ENCODE measurements at regions of chr3 and their contacts with region 1.

Region 1: DNA sequence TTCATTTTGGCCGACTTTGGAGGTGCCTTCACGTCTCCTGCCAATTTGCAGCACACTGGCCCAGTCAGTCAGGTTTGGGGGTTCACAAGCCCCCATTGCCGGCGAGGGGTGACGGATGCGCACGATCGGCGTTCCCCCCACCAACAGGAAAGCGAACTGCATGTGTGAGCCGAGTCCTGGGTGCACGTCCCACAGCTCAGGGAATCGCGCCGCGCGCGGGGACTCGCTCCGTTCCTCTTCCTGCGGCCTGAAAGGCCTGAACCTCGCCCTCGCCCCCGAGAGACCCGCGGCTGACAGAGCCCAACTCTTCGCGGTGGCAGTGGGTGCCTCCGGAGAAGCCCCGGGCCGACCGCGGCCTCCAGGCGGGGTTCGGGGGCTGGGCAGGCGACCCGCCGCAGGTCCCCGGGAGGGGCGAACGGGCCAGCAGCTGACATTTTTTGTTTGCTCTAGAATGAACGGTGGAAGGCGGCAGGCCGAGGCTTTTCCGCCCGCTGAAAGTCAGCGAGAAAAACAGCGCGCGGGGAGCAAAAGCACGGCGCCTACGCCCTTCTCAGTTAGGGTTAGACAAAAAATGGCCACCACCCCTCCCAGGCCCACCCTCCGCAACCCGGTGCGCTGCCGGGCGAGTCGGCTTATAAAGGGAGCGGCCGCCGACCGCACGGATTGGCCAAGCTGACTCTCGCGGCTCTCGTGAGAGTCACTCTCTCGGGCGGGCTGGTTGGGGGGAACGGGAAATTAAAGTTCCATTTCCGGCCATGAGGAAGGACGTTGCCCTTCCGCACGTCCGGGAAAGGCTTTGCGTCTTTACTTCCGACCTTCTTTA is at the start of gene TERC:
- DNase-seq: peak; percentile 72 to 97
- ATAC-seq: peak; percentile 77 to 89 (median 84)
- H3K4me3 ChIP-seq: peak within 1 kb of the TSS; percentile 95
- H3K4me3 Mint-ChIP-seq: peak within 1 kb of the TSS; percentile 99
- H3K27ac ChIP-seq: peak within 1 kb of the TSS; percentile 95
- H3K27ac Mint-ChIP-seq: peak within 1 kb of the TSS; percentile 90 to 92
- H3K4me1 ChIP-seq: peaks cover 15% of the 10 kb centered on the region
- H3K4me1 Mint-ChIP-seq: peaks cover 28 to 36% of the 10 kb centered on the region in 2 donors
- H3K27me3 ChIP-seq: no peaks in the 10 kb centered on the region
- H3K27me3 Mint-ChIP-seq: no peaks in the 10 kb centered on the region
- CTCF ChIP-seq: no peak
- total RNA-seq, gene TERC: 0.92 to 2.7 (median 1.3) TPM

Region 2: GRCh38 chr3:169863458-169863899 is 98.8 kb after region 1 on chr3:
- intact Hi-C with region 1: loop called (anchors 2 kb)
- DNase-seq: peak; percentile 24 to 86
- ATAC-seq: peak; percentile 63 to 74 (median 70)
- H3K4me3 ChIP-seq: no peak overlapping the region
- H3K4me3 Mint-ChIP-seq: no peak overlapping the region
- H3K27ac ChIP-seq: no peak overlapping the region
- H3K27ac Mint-ChIP-seq: no peak overlapping the region
- H3K4me1 ChIP-seq: peaks cover 5% of the 10 kb centered on the region
- H3K4me1 Mint-ChIP-seq: peaks cover 0 to 5% of the 10 kb centered on the region in 2 donors
- H3K27me3 ChIP-seq: no peaks in the 10 kb centered on the region
- H3K27me3 Mint-ChIP-seq: peaks cover 9 to 10% of the 10 kb centered on the region in 2 donors
- CTCF ChIP-seq: peak; percentile 91

Region 3: DNA sequence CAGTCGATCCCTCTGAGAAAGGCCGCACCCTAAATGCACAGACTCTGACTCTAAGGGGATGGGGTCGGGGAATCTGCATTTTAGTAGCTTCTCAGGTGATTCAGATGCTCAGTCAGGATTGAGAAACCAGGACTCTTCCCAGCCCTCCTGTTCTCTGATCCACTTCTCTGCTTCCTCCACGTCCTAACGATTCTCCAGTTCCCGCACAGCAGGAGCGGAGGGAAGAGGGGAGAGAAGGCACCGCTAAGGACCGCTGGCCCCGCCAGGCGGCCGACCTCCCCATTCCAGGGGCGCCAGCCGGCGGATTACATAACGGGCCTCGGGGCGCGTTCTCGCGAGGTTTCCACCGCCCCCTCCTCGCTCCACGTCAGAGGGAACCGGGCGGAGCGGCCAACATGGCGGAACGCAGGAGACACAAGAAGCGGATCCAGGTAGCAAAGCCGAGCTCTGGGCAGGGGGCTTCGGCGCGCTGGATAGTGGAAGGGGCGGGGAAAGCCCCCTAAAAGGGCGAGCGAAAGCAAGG is 201.8 kb after region 1 on chr3 and contains the start of gene SEC62:
- intact Hi-C with region 1: loop called (anchors 1 kb)
- DNase-seq: peak; percentile 93 to 97
- ATAC-seq: peak; percentile 90 to 94 (median 93)
- H3K4me3 ChIP-seq: peak within 1 kb of the TSS; percentile 71
- H3K4me3 Mint-ChIP-seq: peak within 1 kb of the TSS; percentile 98
- H3K27ac ChIP-seq: peak within 1 kb of the TSS; percentile 92
- H3K27ac Mint-ChIP-seq: peak within 1 kb of the TSS; percentile 95 to 98
- H3K4me1 ChIP-seq: peaks cover 14% of the 10 kb centered on the region
- H3K4me1 Mint-ChIP-seq: peaks cover 30 to 40% of the 10 kb centered on the region in 2 donors
- H3K27me3 ChIP-seq: no peaks in the 10 kb centered on the region
- H3K27me3 Mint-ChIP-seq: peaks cover 13 to 17% of the 10 kb centered on the region in 2 donors
- CTCF ChIP-seq: no peak
- total RNA-seq, gene SEC62: 83.3 to 88.5 (median 86.6) TPM

Region 4: GRCh38 chr3:170037463-170038433 is 273.1 kb after region 1 on chr3 and contains the start of gene GPR160:
- intact Hi-C with region 1: loop called (anchors 5 kb)
- DNase-seq: peak; percentile 78 to 87
- ATAC-seq: peak; percentile 86 to 89 (median 88)
- H3K4me3 ChIP-seq: peak within 1 kb of the TSS; percentile 56
- H3K4me3 Mint-ChIP-seq: peak within 1 kb of the TSS; percentile 83
- H3K27ac ChIP-seq: no peak within 1 kb of the TSS
- H3K27ac Mint-ChIP-seq: peak within 1 kb of the TSS in 1 of 2 donors; percentile 58
- H3K4me1 ChIP-seq: peaks cover 24% of the 10 kb centered on the region
- H3K4me1 Mint-ChIP-seq: peaks cover 21 to 22% of the 10 kb centered on the region in 2 donors
- H3K27me3 ChIP-seq: no peaks in the 10 kb centered on the region
- H3K27me3 Mint-ChIP-seq: no peaks in the 10 kb centered on the region
- CTCF ChIP-seq: peak; percentile 87
- total RNA-seq, gene GPR160: 1.8 to 5.5 (median 3.8) TPM

Region 5: GRCh38 chr3:170180908-170181879 is 416.5 kb after region 1 on chr3 and contains the start of gene PHC3:
- intact Hi-C with region 1: loop called (anchors 5 kb)
- DNase-seq: peak; percentile 87 to 96
- ATAC-seq: peak; percentile 79 to 88 (median 83)
- H3K4me3 ChIP-seq: peak within 1 kb of the TSS; percentile 84
- H3K4me3 Mint-ChIP-seq: peak within 1 kb of the TSS; percentile 97
- H3K27ac ChIP-seq: peak within 1 kb of the TSS; percentile 97
- H3K27ac Mint-ChIP-seq: peak within 1 kb of the TSS; percentile 96 to 99
- H3K4me1 ChIP-seq: peaks cover 26% of the 10 kb centered on the region
- H3K4me1 Mint-ChIP-seq: peaks cover 30 to 35% of the 10 kb centered on the region in 2 donors
- H3K27me3 ChIP-seq: no peaks in the 10 kb centered on the region
- H3K27me3 Mint-ChIP-seq: no peaks in the 10 kb centered on the region
- CTCF ChIP-seq: no peak
- total RNA-seq, gene PHC3: 121 to 130 (median 125) TPM